ENCODE measurements at regions of chr14 and their contacts with region 1.

Region 1: GRCh38 chr14:64294672-64295413 is 672 bp upstream of the ESR2 start:
- DNase-seq: peak; percentile 92
- ATAC-seq: peak; percentile 91
- H3K4me3 Mint-ChIP-seq: peak overlapping the region; percentile 91
- H3K27ac Mint-ChIP-seq: peak overlapping the region; percentile 80
- H3K4me1 Mint-ChIP-seq: peaks cover 23% of the 10 kb centered on the region
- H3K27me3 Mint-ChIP-seq: no peaks in the 10 kb centered on the region
- CTCF ChIP-seq: peak; percentile 56

Region 2: GRCh38 chr14:64005822-64006221 is 289.0 kb before region 1 on chr14:
- CTCF ChIA-PET with region 1: interaction called, 13 read pairs
- POLR2A ChIA-PET with region 1: no interaction called
- intact Hi-C with region 1: loop called (anchors 1 kb)
- DNase-seq: no peak
- ATAC-seq: no peak
- H3K4me3 Mint-ChIP-seq: no peak overlapping the region
- H3K27ac Mint-ChIP-seq: no peak overlapping the region
- H3K4me1 Mint-ChIP-seq: peaks cover 10% of the 10 kb centered on the region
- H3K27me3 Mint-ChIP-seq: no peaks in the 10 kb centered on the region
- CTCF ChIP-seq: no peak

Region 3: GRCh38 chr14:64040044-64040443 is 254.8 kb before region 1 on chr14:
- CTCF ChIA-PET with region 1: interaction called, 3 read pairs
- POLR2A ChIA-PET with region 1: no interaction called
- intact Hi-C with region 1: loop called (anchors 1 kb)
- DNase-seq: no peak
- ATAC-seq: no peak
- H3K4me3 Mint-ChIP-seq: no peak overlapping the region
- H3K27ac Mint-ChIP-seq: no peak overlapping the region
- H3K4me1 Mint-ChIP-seq: no peaks in the 10 kb centered on the region
- H3K27me3 Mint-ChIP-seq: no peaks in the 10 kb centered on the region
- CTCF ChIP-seq: no peak

Region 4: GRCh38 chr14:64137657-64138290 is 157.1 kb before region 1 on chr14:
- CTCF ChIA-PET with region 1: interaction called, 56 read pairs
- POLR2A ChIA-PET with region 1: interaction called, 11 read pairs
- intact Hi-C with region 1: loop called (anchors 1 kb)
- DNase-seq: no peak
- ATAC-seq: no peak
- H3K4me3 Mint-ChIP-seq: no peak overlapping the region
- H3K27ac Mint-ChIP-seq: no peak overlapping the region
- H3K4me1 Mint-ChIP-seq: no peaks in the 10 kb centered on the region
- H3K27me3 Mint-ChIP-seq: no peaks in the 10 kb centered on the region
- CTCF ChIP-seq: no peak

Region 5: GRCh38 chr14:64196814-64197411 is 97.9 kb before region 1 on chr14:
- CTCF ChIA-PET with region 1: interaction called, 11 read pairs
- POLR2A ChIA-PET with region 1: interaction called, 9 read pairs
- intact Hi-C with region 1: loop called (anchors 1 kb)
- DNase-seq: peak; percentile 46
- ATAC-seq: peak; percentile 81
- H3K4me3 Mint-ChIP-seq: peak overlapping the region; percentile 83
- H3K27ac Mint-ChIP-seq: peak overlapping the region; percentile 87
- H3K4me1 Mint-ChIP-seq: peaks cover 59% of the 10 kb centered on the region
- H3K27me3 Mint-ChIP-seq: no peaks in the 10 kb centered on the region
- CTCF ChIP-seq: no peak

Region 6: DNA sequence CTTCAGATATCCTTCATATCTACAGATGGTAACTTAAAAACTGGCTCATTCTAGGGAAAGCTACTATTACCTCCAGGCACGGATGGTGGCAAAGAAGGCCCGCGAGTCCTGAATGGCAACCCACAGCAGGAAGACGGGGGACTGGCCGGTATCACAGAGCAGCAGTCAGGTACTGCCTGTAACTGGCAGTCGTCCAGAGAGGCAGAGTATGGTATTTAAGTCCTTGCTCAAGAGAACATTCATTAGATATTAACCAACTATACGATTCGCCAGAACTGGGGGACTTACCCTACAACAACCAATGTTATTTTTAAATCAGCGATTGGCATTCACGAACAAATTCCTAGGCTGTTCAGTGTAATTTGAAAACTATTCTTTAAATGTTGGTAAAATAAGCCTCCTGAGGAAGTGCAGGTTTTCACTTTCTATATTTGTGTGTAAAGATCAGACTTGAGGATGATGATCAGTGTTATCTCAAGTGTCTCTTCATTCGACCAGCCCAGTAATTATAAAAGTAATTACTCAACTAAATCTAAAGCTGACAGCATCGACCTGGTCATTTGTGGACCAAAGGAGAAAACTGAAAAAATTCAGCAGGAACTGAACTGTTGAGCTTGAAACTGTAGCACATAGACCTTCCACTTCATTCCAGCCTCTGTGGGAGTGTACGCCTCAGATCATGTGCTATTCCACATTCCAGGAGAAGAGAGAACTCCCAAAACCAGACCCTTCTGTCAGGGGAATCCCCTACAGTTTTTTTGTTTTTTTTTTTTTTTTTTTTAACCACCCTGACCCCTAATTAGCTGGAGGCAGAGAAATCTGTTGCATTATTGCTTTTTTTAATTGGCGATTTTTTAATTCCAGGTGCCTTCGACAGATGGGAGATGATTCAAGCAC is 76.3 kb before region 1 on chr14:
- CTCF ChIA-PET with region 1: interaction called, 9 read pairs
- POLR2A ChIA-PET with region 1: interaction called, 8 read pairs
- intact Hi-C with region 1: loop called (anchors 1 kb)
- DNase-seq: no peak
- ATAC-seq: peak; percentile 19
- H3K4me3 Mint-ChIP-seq: peak overlapping the region; percentile 63
- H3K27ac Mint-ChIP-seq: peak overlapping the region; percentile 78
- H3K4me1 Mint-ChIP-seq: peaks cover 72% of the 10 kb centered on the region
- H3K27me3 Mint-ChIP-seq: no peaks in the 10 kb centered on the region
- CTCF ChIP-seq: no peak

Region 7: DNA sequence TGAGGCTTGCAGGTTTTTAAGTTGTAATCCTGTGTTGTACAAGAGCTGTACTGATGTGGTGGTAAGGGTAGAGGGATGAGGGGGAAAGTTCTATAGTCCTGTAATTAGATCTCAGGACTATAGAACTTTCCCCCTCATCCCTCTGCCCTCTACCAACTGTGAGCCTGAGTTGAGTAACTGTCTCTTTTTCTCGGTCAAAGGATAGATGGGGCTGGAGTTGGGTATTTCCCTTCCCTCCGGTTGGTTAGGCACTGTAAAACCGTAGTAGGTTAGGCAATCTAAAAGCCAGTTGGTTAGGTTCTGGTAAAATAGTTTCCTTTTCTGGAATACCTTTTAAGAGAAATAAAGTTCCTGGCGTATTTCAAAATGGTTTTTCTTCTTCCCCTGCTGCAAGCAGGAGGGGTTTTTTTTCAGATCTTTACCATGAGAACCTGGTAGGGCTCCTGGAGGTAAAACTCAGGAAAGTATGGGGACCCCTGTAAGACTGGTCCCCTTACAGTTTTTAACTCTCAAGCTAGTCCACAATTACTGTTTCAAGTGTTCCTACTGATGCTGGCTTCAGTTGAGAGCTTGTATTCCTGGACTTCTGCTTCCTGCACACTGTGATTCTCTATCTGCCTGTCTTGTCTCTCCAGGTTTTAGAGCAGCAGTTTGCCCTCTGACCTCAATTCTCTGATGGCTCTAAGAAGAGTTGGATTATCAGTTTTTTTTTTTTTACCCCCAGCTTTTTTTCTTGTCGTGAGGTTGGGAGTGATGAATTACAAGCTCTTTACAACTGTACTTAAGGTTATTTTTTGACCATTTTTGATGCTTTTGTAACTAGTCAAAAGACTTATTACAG is 1176.4 kb after region 1 on chr14:
- CTCF ChIA-PET with region 1: no interaction called
- POLR2A ChIA-PET with region 1: no interaction called
- intact Hi-C with region 1: no loop called
- DNase-seq: no peak
- ATAC-seq: peak; percentile 96
- H3K4me3 Mint-ChIP-seq: peak overlapping the region; percentile 28
- H3K27ac Mint-ChIP-seq: peak overlapping the region; percentile 57
- H3K4me1 Mint-ChIP-seq: peaks cover 55% of the 10 kb centered on the region
- H3K27me3 Mint-ChIP-seq: no peaks in the 10 kb centered on the region
- CTCF ChIP-seq: no peak

Measured in activated B cell treated with CpG ODN at 0.5 μM for 24 hours (primary cell).